A549 (cell line): ENCODE measurements at regions of chr3 and their contacts with region 1.

Region 1: DNA sequence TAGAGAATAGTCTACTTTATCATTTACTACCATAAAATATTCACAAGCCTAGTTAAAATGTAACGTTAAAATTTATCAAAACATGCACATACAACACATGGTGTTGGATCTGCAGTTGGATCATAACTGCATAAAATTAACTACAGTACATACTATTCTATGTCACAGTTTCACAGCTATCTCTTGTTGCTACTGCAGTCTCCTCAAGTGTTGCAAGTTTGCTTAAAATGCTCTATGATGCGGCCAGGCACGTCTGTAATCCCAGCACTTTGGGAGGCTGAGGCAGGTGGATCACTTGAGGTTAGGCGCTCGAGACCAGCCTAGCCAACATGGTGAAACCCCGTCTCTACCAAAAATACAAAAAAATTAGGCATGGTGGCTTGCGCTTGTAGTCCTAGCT is 10.3 kb downstream of the PPP1R2 start:
- DNase-seq: no peak
- ATAC-seq: no peak
- H3K4me3 ChIP-seq: no peak overlapping the region
- H3K27ac ChIP-seq: no peak overlapping the region
- H3K4me1 ChIP-seq: no peaks in the 10 kb centered on the region
- CTCF ChIP-seq: no peak
- EP300 ChIP-seq: no peak
- POLR2A ChIP-seq: no peak
- RAD21 ChIP-seq: no peak

Region 2: DNA sequence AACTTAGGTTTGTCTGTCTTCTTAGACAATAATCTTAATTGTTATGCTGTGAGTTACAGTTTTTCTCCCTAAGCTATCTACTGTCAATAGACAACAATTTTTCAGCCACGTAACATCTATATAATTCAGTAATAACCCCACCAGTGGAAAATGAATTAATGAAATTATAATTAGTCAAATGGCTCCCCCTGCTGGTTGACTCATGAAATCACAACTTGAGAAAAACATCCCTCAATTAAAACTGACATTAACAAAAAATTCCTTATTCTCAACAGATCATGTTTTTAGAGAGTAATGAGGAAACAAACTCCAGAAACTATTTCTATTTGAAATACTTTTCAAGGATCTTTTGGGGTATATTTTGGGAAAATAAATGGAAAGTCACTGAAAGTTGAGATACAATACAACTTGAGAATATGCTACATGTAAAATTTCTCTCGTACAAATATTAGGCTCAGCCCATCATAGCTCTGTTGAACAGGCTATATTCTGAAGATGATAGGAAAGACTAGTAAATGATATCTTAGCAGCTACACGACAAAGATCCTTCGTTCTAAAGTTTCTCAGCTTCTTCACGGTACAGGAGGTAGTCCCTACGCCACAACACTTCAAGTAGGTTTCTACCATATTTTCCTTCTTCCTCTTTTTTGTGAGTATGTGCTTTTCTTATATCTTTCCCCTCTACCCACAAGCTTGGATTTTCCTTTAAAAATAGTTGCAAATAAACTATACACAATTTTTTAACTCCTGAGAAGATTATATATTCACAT is 10.4 kb before region 1 on chr3:
- CTCF ChIA-PET with region 1: interaction called, 11 read pairs
- POLR2A ChIA-PET with region 1: no interaction called
- DNase-seq: peak; percentile 13 to 43
- ATAC-seq: no peak
- H3K4me3 ChIP-seq: no peak overlapping the region
- H3K27ac ChIP-seq: no peak overlapping the region
- H3K4me1 ChIP-seq: no peaks in the 10 kb centered on the region
- CTCF ChIP-seq: peak; percentile 77
- EP300 ChIP-seq: no peak
- POLR2A ChIP-seq: no peak
- RAD21 ChIP-seq: peak; percentile 69 to 79